ENCODE measurements at regions of chr9 and their contacts with region 1.

Region 1: GRCh38 chr9:109903515-109904138 is 123.6 kb downstream of the PALM2AKAP2 start:
- DNase-seq: no peak
- ATAC-seq: peak; percentile 84
- H3K4me3 ChIP-seq: no peak overlapping the region
- H3K27ac ChIP-seq: no peak overlapping the region
- H3K4me1 ChIP-seq: peaks cover 18% of the 10 kb centered on the region
- H3K27me3 ChIP-seq: no peaks in the 10 kb centered on the region
- CTCF ChIP-seq: peak; percentile 82

Region 2: DNA sequence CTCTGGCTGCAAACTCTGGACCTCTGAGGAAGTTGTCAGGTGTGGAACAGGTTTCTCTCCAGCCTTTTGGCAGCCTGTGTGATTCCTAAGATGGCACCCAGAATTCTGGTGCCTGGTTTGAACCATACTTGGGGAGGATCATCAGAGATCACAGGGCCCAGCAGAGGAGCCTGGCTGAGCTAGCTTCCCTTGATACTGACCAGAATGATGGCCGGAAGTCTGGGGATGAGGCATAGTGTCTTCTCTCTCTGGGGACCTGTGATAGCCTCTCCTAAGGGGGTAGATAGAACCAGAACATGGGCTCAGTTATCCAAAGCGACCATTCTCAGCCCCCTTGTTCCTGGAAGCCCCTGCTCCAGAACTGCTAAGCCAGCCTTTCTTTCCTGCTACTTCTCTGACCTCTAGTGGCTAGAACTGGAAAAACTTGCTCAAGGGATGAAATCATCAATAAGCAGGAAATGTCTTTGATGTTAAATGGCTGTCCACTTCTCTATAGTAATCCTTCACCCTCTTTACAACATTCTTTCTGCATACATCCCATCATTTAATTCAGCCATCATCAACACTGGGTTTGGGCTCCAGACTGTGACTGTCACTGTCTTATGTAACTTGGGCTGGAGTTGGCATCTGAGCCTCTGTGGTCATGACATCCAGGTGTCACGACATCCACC is 249.2 kb after region 1 on chr9:
- intact Hi-C with region 1: loop called (anchors 10 kb)
- DNase-seq: no peak
- ATAC-seq: peak; percentile 56
- H3K4me3 ChIP-seq: no peak overlapping the region
- H3K27ac ChIP-seq: no peak overlapping the region
- H3K4me1 ChIP-seq: peaks cover 50% of the 10 kb centered on the region
- H3K27me3 ChIP-seq: no peaks in the 10 kb centered on the region
- CTCF ChIP-seq: peak; percentile 75